Activated B cell treated with CpG ODN at 0.5 μM for 24 hours (primary cell): ENCODE measurements at regions of chr5 and their contacts with region 1.

Region 1: DNA sequence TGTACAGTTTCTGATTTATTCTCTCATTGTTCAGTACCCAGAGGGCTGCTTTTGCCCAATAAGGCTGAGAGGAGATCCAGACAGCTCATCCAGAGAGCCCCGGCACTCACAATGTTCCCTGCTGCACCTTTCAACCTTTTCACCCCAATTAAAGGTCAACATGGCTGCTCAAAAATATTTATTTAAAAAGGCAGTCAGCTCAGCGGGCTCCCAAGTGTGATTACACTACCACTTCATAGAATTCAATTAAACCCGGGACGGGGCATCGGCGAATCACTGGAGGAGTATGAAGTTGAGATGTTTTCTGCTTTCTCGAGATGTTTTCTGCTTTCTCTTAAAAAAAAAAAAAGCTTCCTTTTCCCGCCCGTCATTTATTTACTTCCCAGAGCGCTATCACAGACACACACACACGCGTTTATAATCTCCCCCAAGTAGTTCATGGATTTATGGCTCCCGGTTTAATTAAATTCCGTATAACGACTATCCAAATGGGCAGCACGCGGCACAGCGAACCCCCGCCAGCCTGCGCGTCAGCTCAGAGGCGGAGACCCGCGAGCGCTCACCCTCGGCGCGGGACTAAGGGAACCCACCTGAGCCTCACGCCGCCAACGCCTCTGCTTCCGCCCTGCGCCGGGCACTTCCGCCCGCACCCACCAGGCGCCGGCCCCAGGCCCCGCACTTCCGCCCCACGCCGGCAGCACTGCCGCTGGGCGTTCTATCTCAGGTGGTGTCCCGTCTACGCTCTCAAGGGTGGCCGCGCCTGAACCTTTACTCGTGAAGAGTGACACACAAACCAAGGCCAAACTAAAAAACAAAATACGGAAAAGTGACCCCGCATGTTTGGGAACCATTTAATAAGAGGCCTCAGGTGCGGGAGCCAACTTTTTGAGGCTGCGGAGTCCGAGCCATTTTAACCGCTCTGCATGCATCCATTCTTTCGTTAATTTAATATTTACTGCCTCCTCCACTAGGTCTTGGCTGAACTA is at the start of gene C5orf63:
- DNase-seq: peak; percentile 77
- ATAC-seq: peak; percentile 99
- H3K4me3 Mint-ChIP-seq: peak within 1 kb of the TSS; percentile 87
- H3K27ac Mint-ChIP-seq: peak within 1 kb of the TSS; percentile 87
- H3K4me1 Mint-ChIP-seq: peaks cover 9% of the 10 kb centered on the region
- H3K27me3 Mint-ChIP-seq: no peaks in the 10 kb centered on the region
- CTCF ChIP-seq: no peak
- total RNA-seq, gene C5orf63: 20.4 and 22.5 TPM in 2 replicates

Region 2: GRCh38 chr5:126846344-126846743 is 226.8 kb before region 1 on chr5:
- CTCF ChIA-PET with region 1: no interaction called
- POLR2A ChIA-PET with region 1: interaction called, 9 read pairs
- intact Hi-C with region 1: loop called (anchors 2 kb)
- DNase-seq: no peak
- ATAC-seq: no peak
- H3K4me3 Mint-ChIP-seq: no peak overlapping the region
- H3K27ac Mint-ChIP-seq: peak overlapping the region; percentile 95
- H3K4me1 Mint-ChIP-seq: peaks cover 41% of the 10 kb centered on the region
- H3K27me3 Mint-ChIP-seq: no peaks in the 10 kb centered on the region
- CTCF ChIP-seq: no peak

Region 3: GRCh38 chr5:126972062-126972895 is 100.9 kb before region 1 on chr5:
- CTCF ChIA-PET with region 1: no interaction called
- POLR2A ChIA-PET with region 1: interaction called, 7 read pairs
- intact Hi-C with region 1: loop called (anchors 5 kb)
- DNase-seq: peak; percentile 29
- ATAC-seq: peak; percentile 77
- H3K4me3 Mint-ChIP-seq: peak overlapping the region; percentile 84
- H3K27ac Mint-ChIP-seq: peak overlapping the region; percentile 100
- H3K4me1 Mint-ChIP-seq: peaks cover 77% of the 10 kb centered on the region
- H3K27me3 Mint-ChIP-seq: no peaks in the 10 kb centered on the region
- CTCF ChIP-seq: no peak

Region 4: DNA sequence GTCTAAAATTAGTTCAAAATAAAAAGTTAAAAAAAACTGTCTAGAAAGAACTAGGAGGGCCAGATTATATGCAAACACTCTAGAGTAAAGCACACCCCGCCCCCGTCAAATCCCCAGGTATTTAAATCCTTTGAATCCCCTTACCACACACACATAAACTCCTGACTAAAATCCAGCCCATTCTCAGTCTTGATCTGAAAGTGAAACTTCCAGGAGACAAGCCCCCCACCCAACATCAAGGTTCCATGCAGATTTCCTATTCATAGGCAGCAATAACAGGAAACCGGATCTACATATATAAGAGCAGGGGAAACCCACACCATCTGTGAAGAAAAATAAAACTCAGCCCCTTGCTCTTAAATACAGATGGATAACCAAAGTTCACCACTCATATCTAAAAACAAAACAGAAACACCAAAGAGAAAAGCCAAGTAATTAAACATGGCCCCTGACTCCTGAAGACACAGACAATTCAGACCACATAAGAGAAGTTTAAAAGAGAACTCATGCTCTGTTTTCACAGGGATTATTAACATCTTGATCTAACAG is 85.1 kb before region 1 on chr5:
- CTCF ChIA-PET with region 1: no interaction called
- POLR2A ChIA-PET with region 1: no interaction called
- intact Hi-C with region 1: loop called (anchors 2 kb)
- DNase-seq: no peak
- ATAC-seq: peak; percentile 84
- H3K4me3 Mint-ChIP-seq: peak overlapping the region; percentile 82
- H3K27ac Mint-ChIP-seq: peak overlapping the region; percentile 97
- H3K4me1 Mint-ChIP-seq: peaks cover 88% of the 10 kb centered on the region
- H3K27me3 Mint-ChIP-seq: no peaks in the 10 kb centered on the region
- CTCF ChIP-seq: no peak

Region 5: GRCh38 chr5:127229185-127229889 is 156.2 kb after region 1 on chr5:
- CTCF ChIA-PET with region 1: no interaction called
- POLR2A ChIA-PET with region 1: interaction called, 12 read pairs
- intact Hi-C with region 1: loop called (anchors 1 kb)
- DNase-seq: peak; percentile 62
- ATAC-seq: peak; percentile 86
- H3K4me3 Mint-ChIP-seq: peak overlapping the region; percentile 85
- H3K27ac Mint-ChIP-seq: no peak overlapping the region
- H3K4me1 Mint-ChIP-seq: peaks cover 18% of the 10 kb centered on the region
- H3K27me3 Mint-ChIP-seq: no peaks in the 10 kb centered on the region
- CTCF ChIP-seq: no peak

Region 6: DNA sequence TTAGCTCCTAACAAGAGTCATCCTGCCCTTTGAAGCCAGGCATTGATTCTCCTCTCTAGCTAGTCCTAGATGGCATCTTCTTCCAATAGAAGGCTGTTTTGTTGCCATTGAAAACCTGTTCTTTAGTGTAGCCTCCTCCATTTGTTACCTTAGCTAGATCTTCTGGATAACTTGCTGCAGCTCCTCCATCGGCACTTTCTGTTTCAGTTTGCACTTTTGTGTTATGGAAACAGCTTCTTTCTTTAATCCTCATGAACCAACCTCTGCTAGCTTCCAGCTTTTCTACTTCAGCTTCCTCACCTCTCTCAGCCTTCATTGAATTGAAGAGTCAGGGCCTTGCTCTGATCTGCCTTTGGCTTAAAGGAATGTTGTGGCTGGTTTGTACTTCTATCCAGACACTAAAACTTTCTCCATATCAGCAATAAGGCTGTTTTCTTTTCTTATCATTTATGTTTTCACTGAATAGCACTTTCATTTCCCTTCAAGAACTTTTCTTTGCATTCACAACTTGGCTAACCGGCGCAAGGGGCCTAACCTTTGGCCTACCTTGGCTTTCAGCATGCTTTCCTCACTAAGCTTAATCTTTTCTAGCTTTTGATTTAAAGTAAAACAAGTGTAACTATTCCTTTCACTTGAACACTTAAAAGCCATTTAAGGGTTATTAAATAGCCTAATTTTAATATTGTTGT is 843.9 kb after region 1 on chr5:
- CTCF ChIA-PET with region 1: no interaction called
- POLR2A ChIA-PET with region 1: no interaction called
- intact Hi-C with region 1: no loop called
- DNase-seq: no peak
- ATAC-seq: no peak
- H3K4me3 Mint-ChIP-seq: no peak overlapping the region
- H3K27ac Mint-ChIP-seq: no peak overlapping the region
- H3K4me1 Mint-ChIP-seq: peaks cover 8% of the 10 kb centered on the region
- H3K27me3 Mint-ChIP-seq: no peaks in the 10 kb centered on the region
- CTCF ChIP-seq: no peak